WTC11 (cell line): ENCODE measurements at regions of chr21 and their contacts with region 1.

Region 1: GRCh38 chr21:16330082-16330907 is 600.5 kb downstream of the USP25 start:
- DNase-seq: no peak
- ATAC-seq: peak; percentile 94
- H3K4me3 Mint-ChIP-seq: no peak overlapping the region
- H3K27ac Mint-ChIP-seq: no peak overlapping the region
- H3K4me1 Mint-ChIP-seq: peaks cover 13% of the 10 kb centered on the region
- H3K27me3 Mint-ChIP-seq: no peaks in the 10 kb centered on the region
- CTCF ChIP-seq: peak; percentile 30; the same call in 1 of the 2 replicates

Region 2: DNA sequence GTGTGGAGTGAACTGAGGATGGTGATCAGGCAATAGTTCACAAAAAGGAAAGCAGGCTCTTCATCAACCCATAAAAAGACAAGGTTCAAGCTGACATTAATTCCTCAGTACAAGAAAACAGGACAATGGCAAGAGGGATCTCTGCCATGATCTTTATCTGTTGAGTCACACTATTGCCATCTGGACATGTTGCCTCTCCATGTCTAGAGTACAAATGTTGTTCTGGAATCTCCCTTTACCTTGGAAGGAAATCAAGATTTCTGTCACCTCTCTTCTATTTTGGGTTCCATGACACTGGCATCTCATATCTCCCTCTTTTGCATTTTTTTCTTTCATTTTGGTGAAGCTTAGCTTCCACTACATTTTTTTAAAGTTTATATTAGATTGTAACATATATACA is 271.4 kb before region 1 on chr21:
- CTCF ChIA-PET with region 1: no interaction called
- POLR2A ChIA-PET with region 1: no interaction called
- DNase-seq: no peak
- ATAC-seq: no peak
- H3K4me3 Mint-ChIP-seq: no peak overlapping the region
- H3K27ac Mint-ChIP-seq: no peak overlapping the region
- H3K4me1 Mint-ChIP-seq: peaks cover 7% of the 10 kb centered on the region
- H3K27me3 Mint-ChIP-seq: no peaks in the 10 kb centered on the region
- CTCF ChIP-seq: no peak

Region 3: DNA sequence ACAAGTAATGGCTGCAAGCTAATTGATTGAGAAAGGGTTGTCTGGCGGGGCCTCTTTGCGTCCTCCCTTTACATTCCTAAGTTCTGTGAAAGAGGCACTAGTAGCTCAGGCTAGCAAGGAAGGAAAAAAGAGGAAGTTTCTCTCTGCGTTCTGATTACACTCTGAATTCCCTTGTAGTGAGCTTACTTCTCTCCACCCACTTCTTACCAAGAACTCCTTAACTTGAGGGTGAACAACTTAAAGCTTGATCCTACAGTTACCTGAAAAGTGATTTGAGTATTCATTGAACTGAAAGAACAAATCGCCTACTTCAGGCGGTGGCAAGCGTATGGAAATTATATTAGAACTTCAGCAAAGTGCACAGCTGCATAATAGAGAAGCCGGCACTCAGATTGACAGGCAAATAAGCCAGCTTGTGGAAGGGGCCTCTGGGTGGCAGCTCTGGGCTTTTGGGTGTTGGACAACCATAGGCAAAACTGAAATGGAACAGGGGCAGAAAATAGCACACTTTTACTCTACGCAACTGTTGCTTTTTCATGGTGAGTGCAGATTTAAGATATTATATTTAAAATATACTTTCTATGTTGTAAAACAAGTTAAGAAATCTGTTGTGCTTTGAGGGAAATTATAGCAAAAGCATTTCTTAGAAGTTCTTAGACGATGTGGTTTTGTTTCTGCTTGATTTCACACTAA is 136.1 kb before region 1 on chr21:
- CTCF ChIA-PET with region 1: interaction called, 11 read pairs
- POLR2A ChIA-PET with region 1: no interaction called
- DNase-seq: peak; percentile 24
- ATAC-seq: peak; percentile 83
- H3K4me3 Mint-ChIP-seq: no peak overlapping the region
- H3K27ac Mint-ChIP-seq: peak overlapping the region; percentile 68
- H3K4me1 Mint-ChIP-seq: peaks cover 15% of the 10 kb centered on the region
- H3K27me3 Mint-ChIP-seq: no peaks in the 10 kb centered on the region
- CTCF ChIP-seq: no peak

Region 4: GRCh38 chr21:16441789-16442188 is 111.5 kb after region 1 on chr21:
- CTCF ChIA-PET with region 1: no interaction called
- POLR2A ChIA-PET with region 1: no interaction called
- DNase-seq: no peak
- ATAC-seq: no peak
- H3K4me3 Mint-ChIP-seq: no peak overlapping the region
- H3K27ac Mint-ChIP-seq: no peak overlapping the region
- H3K4me1 Mint-ChIP-seq: peaks cover 5% of the 10 kb centered on the region; the same call in 1 of the 2 replicates
- H3K27me3 Mint-ChIP-seq: no peaks in the 10 kb centered on the region
- CTCF ChIP-seq: no peak

Region 5: DNA sequence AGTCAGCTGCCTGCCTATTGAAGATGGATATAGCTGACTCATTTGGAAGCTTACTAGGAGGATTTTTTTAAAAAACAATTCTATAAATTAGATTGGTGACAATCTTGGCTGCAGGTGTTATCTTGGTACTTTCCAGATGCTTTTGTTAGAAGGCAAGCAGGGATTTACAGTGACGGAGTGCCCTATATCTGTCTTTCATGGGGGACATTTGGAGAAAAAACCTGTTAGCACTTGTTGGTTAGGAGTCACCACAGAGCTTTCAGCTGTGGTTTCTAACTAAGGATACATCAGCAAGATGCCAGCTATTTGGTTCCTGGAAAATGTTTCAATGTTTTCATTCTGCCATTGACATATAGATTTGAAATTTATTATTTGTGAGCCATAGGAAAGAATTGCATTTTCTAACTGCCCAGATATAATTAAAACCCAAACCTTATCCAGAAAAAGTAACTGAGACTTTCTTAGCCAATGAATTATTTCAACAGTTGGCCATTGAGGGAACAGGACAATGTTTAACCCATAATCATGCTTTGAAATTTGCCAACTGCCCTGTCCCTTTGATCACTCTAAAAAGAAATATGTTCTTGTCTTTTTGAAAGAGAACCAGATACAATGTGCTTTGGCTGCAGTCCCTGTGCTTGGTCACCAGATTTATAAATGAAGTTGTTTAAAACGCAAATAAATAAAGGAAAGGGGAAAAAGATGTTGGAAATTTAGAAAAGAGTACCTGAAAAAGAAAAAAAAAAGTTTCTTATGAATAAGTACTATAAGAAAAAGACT is 421.6 kb after region 1 on chr21:
- CTCF ChIA-PET with region 1: no interaction called
- POLR2A ChIA-PET with region 1: no interaction called
- DNase-seq: no peak
- ATAC-seq: no peak
- H3K4me3 Mint-ChIP-seq: no peak overlapping the region
- H3K27ac Mint-ChIP-seq: no peak overlapping the region
- H3K4me1 Mint-ChIP-seq: peaks cover 9% of the 10 kb centered on the region
- H3K27me3 Mint-ChIP-seq: no peaks in the 10 kb centered on the region
- CTCF ChIP-seq: no peak